GM12878 (cell line): ENCODE measurements at regions of chr11 and their contacts with region 1.

Region 1: GRCh38 chr11:119067371-119068222 is at the start of gene VPS11:
- DNase-seq: peak; percentile 78
- ATAC-seq: peak; percentile 98
- H3K4me3 ChIP-seq: peak within 1 kb of the TSS; percentile 80
- H3K27ac ChIP-seq: peak within 1 kb of the TSS; percentile 59
- H3K4me1 ChIP-seq: no peaks in the 10 kb centered on the region
- H3K27me3 ChIP-seq: no peaks in the 10 kb centered on the region
- CTCF ChIP-seq: no peak
- EP300 ChIP-seq: 0 out of 4 replicates have a peak, but pooled peaks have one; percentile 17 to 29
- POLR2A ChIP-seq: peak; percentile 85
- RAD21 ChIP-seq: no peak
- polyA plus RNA-seq, gene VPS11: 18.3 to 18.9 TPM

Region 2: DNA sequence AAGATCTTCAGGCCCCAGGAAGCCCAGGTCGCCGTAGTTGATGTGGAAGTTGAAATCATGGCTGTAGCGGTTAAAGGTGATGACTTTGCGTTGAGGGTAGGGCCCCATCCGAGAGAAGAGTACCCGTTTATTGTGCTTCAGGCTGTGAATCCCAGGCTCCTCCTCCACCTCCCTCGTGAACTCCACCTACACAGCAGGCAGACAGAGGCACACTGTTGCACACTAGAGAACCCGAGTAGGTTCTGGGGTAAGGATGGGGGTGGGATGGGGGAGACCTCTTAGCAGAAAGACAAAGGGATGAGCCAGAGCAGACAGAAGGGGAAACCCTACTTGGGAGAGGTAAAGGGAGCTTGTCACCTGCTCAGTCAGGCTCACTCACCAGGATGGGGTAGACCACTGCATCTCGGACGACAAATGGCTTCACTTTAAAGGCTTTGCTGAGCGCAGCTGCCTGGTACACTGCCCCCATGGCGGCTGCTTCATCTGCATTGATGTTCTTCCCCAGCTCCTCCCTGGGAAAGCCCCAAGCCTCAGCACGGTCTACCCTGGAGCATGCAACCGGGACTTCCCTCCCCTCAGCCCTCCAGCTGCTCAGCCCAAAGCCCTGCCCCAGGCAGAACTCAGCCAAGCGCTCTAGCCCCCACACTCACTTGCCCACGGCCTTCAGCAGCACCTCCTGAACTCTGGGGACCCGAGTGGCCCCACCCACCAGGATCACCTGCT is 16.0 kb before region 1 on chr11:
- CTCF ChIA-PET with region 1: interaction called, 12 read pairs
- POLR2A ChIA-PET with region 1: interaction called, 10 read pairs
- RAD21 ChIA-PET with region 1: interaction called, 20 read pairs
- SMC1A ChIA-PET with region 1: interaction called, 6 read pairs
- in situ Hi-C with region 1: no loop called
- intact Hi-C with region 1: no loop called
- DNase-seq: peak; percentile 51
- ATAC-seq: peak; percentile 88
- H3K4me3 ChIP-seq: peak overlapping the region; percentile 43; the same call in 1 of the 2 replicates
- H3K27ac ChIP-seq: peak overlapping the region; percentile 71
- H3K4me1 ChIP-seq: peaks cover 33% of the 10 kb centered on the region
- H3K27me3 ChIP-seq: no peaks in the 10 kb centered on the region
- CTCF ChIP-seq: no peak
- EP300 ChIP-seq: no peak
- POLR2A ChIP-seq: peak; percentile 73
- RAD21 ChIP-seq: no peak

Region 3: GRCh38 chr11:119057000-119057769 is 10.4 kb before region 1 on chr11 and contains the start of gene HYOU1:
- CTCF ChIA-PET with region 1: interaction called, 12 read pairs
- POLR2A ChIA-PET with region 1: interaction called, 10 read pairs
- RAD21 ChIA-PET with region 1: interaction called, 20 read pairs
- SMC1A ChIA-PET with region 1: interaction called, 6 read pairs
- in situ Hi-C with region 1: no loop called
- intact Hi-C with region 1: no loop called
- DNase-seq: peak; percentile 69
- ATAC-seq: peak; percentile 93
- H3K4me3 ChIP-seq: peak within 1 kb of the TSS; percentile 96
- H3K27ac ChIP-seq: peak within 1 kb of the TSS; percentile 79
- H3K4me1 ChIP-seq: peaks cover 19% of the 10 kb centered on the region
- H3K27me3 ChIP-seq: no peaks in the 10 kb centered on the region
- CTCF ChIP-seq: peak; percentile 17 to 26 (median 22); a peak in 2 of 6 replicates
- EP300 ChIP-seq: no peak
- POLR2A ChIP-seq: peak; percentile 88
- RAD21 ChIP-seq: no peak
- polyA plus RNA-seq, gene HYOU1: 15.4 to 46.3 TPM

Region 4: GRCh38 chr11:119084663-119085436 is 17.3 kb after region 1 on chr11 and contains the start of gene HMBS:
- CTCF ChIA-PET with region 1: interaction called, 9 read pairs
- POLR2A ChIA-PET with region 1: interaction called, 48 read pairs
- RAD21 ChIA-PET with region 1: interaction called, 16 read pairs
- SMC1A ChIA-PET with region 1: interaction called, 9 read pairs
- in situ Hi-C with region 1: no loop called
- intact Hi-C with region 1: loop called (anchors 1 kb)
- DNase-seq: peak; percentile 79
- ATAC-seq: peak; percentile 95
- H3K4me3 ChIP-seq: peak within 1 kb of the TSS; percentile 97
- H3K27ac ChIP-seq: peak within 1 kb of the TSS; percentile 94
- H3K4me1 ChIP-seq: peaks cover 10% of the 10 kb centered on the region
- H3K27me3 ChIP-seq: no peaks in the 10 kb centered on the region
- CTCF ChIP-seq: no peak
- EP300 ChIP-seq: peak in 1 of 2 experiments; percentile 12; a peak in 1 of 4 replicates
- POLR2A ChIP-seq: peak; percentile 89
- RAD21 ChIP-seq: no peak
- polyA plus RNA-seq, gene HMBS: 17.7 to 27.6 TPM

Region 5: GRCh38 chr11:119095066-119095880 is 27.7 kb after region 1 on chr11:
- CTCF ChIA-PET with region 1: interaction called, 13 read pairs
- POLR2A ChIA-PET with region 1: interaction called, 4 read pairs
- RAD21 ChIA-PET with region 1: interaction called, 5 read pairs
- SMC1A ChIA-PET with region 1: interaction called, 4 read pairs
- in situ Hi-C with region 1: no loop called
- intact Hi-C with region 1: loop called (anchors 1 kb)
- DNase-seq: peak; percentile 99
- ATAC-seq: peak; percentile 89
- H3K4me3 ChIP-seq: peak overlapping the region; percentile 83
- H3K27ac ChIP-seq: peak overlapping the region; percentile 60
- H3K4me1 ChIP-seq: peaks cover 25% of the 10 kb centered on the region
- H3K27me3 ChIP-seq: no peaks in the 10 kb centered on the region
- CTCF ChIP-seq: peak in 1 of 3 experiments; percentile 37; a peak in 1 of 6 replicates
- EP300 ChIP-seq: 0 out of 4 replicates have a peak, but pooled peaks of 1 of the 2 experiments have one; percentile 8
- POLR2A ChIP-seq: peak; percentile 100
- RAD21 ChIP-seq: no peak

Region 6: GRCh38 chr11:119196833-119197483 is 129.4 kb after region 1 on chr11:
- CTCF ChIA-PET with region 1: interaction called, 9 read pairs
- POLR2A ChIA-PET with region 1: no interaction called
- RAD21 ChIA-PET with region 1: interaction called, 6 read pairs
- SMC1A ChIA-PET with region 1: interaction called, 5 read pairs
- in situ Hi-C with region 1: no loop called
- intact Hi-C with region 1: loop called (anchors 1 kb)
- DNase-seq: peak; percentile 59
- ATAC-seq: peak; percentile 97
- H3K4me3 ChIP-seq: no peak overlapping the region
- H3K27ac ChIP-seq: no peak overlapping the region
- H3K4me1 ChIP-seq: no peaks in the 10 kb centered on the region
- H3K27me3 ChIP-seq: 0 out of 4 replicates have a peak, but pooled peaks cover 0 to 2% of the 10 kb centered on the region in 2 experiments
- CTCF ChIP-seq: peak; percentile 75 to 92 (median 84)
- EP300 ChIP-seq: no peak
- POLR2A ChIP-seq: no peak
- RAD21 ChIP-seq: peak; percentile 92

Region 7: GRCh38 chr11:119284344-119285157 is 217.0 kb after region 1 on chr11:
- CTCF ChIA-PET with region 1: interaction called, 9 read pairs
- POLR2A ChIA-PET with region 1: no interaction called
- RAD21 ChIA-PET with region 1: interaction called, 11 read pairs
- SMC1A ChIA-PET with region 1: no interaction called
- in situ Hi-C with region 1: no loop called
- intact Hi-C with region 1: no loop called
- DNase-seq: no peak
- ATAC-seq: peak; percentile 93
- H3K4me3 ChIP-seq: no peak overlapping the region
- H3K27ac ChIP-seq: no peak overlapping the region
- H3K4me1 ChIP-seq: no peaks in the 10 kb centered on the region
- H3K27me3 ChIP-seq: no peaks in the 10 kb centered on the region
- CTCF ChIP-seq: peak; percentile 48 to 75 (median 55)
- EP300 ChIP-seq: no peak
- POLR2A ChIP-seq: no peak
- RAD21 ChIP-seq: peak; percentile 82